Esophagus squamous epithelium (tissue), 5 donors: ENCODE measurements at regions of chr9 and their contacts with region 1.

Region 1: DNA sequence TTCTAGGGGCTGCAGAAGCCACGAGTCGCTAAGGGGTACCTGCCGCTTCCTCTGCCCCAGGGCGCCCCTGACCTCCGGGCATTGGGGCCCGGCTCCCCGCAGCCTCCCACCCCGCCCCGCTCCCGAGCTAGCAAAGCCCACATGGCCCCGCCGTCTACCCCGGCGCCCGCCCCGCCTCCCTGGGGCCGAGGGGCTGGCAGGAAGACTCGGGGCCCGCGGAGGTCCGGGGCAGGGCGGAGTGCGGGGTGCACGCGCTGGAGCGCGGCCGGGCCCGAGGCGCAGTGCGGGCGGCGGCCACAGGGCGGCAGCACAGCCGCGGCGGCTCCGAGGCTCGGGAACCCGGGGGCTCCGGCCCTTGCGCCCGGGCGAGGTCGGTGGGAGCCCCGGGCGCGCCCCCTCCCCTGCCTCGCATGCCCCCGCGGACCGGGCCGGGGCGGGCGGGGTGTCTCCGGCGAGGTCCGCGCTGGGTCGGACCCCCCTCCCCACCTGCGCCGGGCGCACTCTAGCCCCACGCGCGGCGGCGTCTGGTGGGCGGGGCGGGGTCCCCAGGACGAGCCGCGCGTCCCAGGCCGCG is 6.7 kb downstream of the NRARP start:
- DNase-seq: no peak
- H3K4me3 ChIP-seq: peak overlapping the region; percentile 29 to 71 (median 50)
- H3K27ac ChIP-seq: peak overlapping the region in 3 of 4 donors; percentile 56 to 85 (median 83)
- H3K4me1 ChIP-seq: peaks cover 27 to 69% (median 30%) of the 10 kb centered on the region in 3 donors
- H3K27me3 ChIP-seq: peaks cover 0 to 84% (median 4%) of the 10 kb centered on the region in 4 donors
- CTCF ChIP-seq: peak; percentile 9 to 94 (median 84)
- POLR2A ChIP-seq: no peak

Region 2: DNA sequence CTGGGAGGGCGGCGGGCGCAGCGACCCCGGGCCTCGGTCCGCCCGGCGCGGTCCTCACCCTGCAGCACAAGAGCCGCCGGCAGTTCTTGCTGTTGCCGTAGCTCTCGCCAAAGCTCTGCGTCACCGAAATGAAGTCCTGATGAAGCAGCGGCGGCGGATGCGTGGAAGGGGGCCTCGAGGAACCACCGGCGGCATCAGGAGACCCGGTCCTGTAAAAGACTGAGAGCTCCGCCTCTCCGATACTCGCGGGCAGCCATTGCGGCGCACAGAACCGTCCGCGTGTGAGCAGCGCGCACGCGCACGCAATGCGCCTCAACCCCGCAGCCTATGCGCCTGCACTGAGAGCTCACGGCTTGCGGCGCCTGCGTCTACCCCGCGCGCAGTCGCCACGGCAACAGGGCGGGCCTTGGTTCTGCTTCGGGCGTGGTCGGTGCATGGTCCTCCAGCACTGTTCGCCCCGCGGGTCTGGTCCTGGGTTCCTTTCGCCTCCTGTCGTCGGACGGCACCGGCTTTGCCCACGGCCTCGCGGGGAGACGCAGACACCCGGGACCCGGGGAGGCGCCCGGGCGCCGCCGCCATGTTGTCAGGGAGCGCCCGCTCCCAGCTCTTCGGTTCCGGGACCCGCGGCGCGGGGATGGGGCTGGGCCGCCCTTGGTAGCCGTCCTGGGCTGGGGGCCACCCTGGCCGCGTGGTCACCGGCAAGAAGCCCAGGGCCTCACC is 165.7 kb before region 1 on chr9:
- intact Hi-C with region 1: no loop called
- DNase-seq: peak; percentile 48
- H3K4me3 ChIP-seq: peak overlapping the region; percentile 62 to 96 (median 82)
- H3K27ac ChIP-seq: peak overlapping the region; percentile 71 to 83 (median 82)
- H3K4me1 ChIP-seq: peaks cover 23 to 42% (median 24%) of the 10 kb centered on the region in 3 donors
- H3K27me3 ChIP-seq: peaks cover 0 to 40% (median 0%) of the 10 kb centered on the region in 4 donors
- CTCF ChIP-seq: peak in 2 of 6 experiments; percentile 8 to 32
- POLR2A ChIP-seq: peak in 2 of 4 donors; percentile 33 to 64

Region 3: DNA sequence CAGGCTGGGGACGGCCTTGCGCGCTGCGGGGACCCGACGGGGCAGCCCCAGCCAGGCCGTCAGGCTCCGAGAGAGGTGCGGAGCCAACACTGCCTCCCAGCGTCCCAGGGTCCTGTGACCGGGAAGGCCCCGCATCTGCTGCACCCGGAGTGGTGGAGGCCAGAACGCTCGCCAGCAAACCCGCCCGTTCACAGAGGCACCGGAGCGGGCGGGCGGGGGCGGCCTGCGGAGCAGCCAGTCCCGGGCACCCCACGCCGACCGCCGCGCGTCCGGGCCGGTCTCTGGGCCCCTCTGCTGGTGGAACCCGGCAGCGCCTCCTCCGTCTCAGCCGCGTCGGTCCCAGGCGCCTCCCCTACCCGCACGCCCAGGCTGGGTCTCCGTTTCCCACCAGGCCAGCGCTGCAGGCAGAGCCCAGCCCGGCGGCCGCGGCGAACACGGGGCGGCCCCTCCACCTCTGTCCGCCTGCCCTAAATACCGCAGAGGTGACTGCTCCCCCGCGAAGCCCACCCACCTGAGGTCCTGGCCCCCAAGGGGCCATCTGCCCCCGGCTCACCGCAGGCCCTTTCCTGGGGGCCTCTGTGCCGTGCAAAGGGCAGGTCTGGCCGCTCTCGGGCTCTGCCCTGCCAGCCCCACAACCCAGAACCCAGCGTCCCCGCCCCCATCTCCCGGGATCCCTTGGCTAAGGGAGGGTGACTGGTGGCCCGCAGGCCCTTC is 111.7 kb after region 1 on chr9:
- intact Hi-C with region 1: loop called (anchors 5 kb)
- DNase-seq: no peak
- H3K4me3 ChIP-seq: peak overlapping the region; percentile 23 to 65 (median 38)
- H3K27ac ChIP-seq: peak overlapping the region in 3 of 4 donors; percentile 7 to 55 (median 44)
- H3K4me1 ChIP-seq: peaks cover 24 to 36% (median 27%) of the 10 kb centered on the region in 3 donors
- H3K27me3 ChIP-seq: peaks cover 0 to 5% (median 0%) of the 10 kb centered on the region in 4 donors
- CTCF ChIP-seq: peak; percentile 53 to 93 (median 82)
- POLR2A ChIP-seq: no peak

Region 4: GRCh38 chr9:137435980-137436760 is 140.8 kb after region 1 on chr9:
- intact Hi-C with region 1: loop called (anchors 10 kb)
- DNase-seq: no peak
- H3K4me3 ChIP-seq: peak overlapping the region in 1 of 4 donors; percentile 14
- H3K27ac ChIP-seq: no peak overlapping the region
- H3K4me1 ChIP-seq: peaks cover 6 to 27% (median 8%) of the 10 kb centered on the region in 3 donors
- H3K27me3 ChIP-seq: peaks cover 0 to 58% (median 0%) of the 10 kb centered on the region in 4 donors
- CTCF ChIP-seq: no peak
- POLR2A ChIP-seq: no peak